ENCODE measurements at regions of chr2 and their contacts with region 1.

Region 1: DNA sequence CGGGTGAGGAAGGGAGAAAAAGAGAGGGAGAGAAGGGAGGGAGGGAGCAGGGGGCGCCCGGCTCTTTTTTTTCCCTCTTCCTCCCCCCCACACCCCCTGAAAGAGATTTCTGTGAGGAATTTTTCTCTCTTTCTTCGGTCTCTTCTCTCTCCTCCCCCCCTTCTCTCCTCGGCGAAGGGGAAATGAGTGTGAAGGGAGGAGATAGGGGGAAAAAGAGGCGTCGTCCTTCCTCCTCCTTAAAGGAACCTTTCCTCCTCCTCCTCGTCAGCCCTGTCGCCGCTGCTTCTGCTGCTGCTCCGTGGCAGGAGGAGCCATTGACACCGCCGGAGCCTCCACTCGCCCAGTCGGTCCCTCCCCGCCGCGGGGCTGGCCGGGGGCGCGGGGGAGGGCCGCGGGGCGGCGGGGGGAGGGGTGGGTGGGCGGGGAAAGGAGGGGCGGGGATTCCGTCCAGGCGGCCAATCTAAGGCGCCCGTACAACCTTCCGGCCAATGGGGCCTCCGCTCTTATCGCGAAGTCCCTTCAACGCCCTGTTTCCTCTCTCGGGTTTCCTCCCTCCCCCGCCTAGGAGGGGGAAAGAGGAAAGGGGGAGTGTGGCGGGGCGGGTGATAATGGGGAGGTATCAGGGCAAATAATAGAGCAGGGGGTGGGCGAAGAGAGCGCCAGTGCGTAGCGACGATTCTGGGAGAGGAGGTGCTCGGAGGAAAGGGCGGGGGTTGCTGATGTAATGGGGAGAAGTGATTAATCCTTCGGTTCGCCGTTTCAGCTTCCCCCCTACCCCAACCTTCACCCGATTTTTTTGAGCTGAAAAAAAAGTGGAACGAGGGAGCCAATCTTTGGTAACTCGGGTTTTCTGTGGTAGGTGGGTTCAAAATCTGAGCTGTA is at the start of gene FBXO11:
- DNase-seq: peak; percentile 97
- H3K4me3 Mint-ChIP-seq: peak within 1 kb of the TSS; percentile 87
- H3K27ac Mint-ChIP-seq: peak within 1 kb of the TSS; percentile 96
- H3K4me1 Mint-ChIP-seq: peaks cover 29% of the 10 kb centered on the region
- H3K27me3 Mint-ChIP-seq: no peaks in the 10 kb centered on the region
- total RNA-seq, gene FBXO11: 32.8 to 35.0 TPM

Region 2: DNA sequence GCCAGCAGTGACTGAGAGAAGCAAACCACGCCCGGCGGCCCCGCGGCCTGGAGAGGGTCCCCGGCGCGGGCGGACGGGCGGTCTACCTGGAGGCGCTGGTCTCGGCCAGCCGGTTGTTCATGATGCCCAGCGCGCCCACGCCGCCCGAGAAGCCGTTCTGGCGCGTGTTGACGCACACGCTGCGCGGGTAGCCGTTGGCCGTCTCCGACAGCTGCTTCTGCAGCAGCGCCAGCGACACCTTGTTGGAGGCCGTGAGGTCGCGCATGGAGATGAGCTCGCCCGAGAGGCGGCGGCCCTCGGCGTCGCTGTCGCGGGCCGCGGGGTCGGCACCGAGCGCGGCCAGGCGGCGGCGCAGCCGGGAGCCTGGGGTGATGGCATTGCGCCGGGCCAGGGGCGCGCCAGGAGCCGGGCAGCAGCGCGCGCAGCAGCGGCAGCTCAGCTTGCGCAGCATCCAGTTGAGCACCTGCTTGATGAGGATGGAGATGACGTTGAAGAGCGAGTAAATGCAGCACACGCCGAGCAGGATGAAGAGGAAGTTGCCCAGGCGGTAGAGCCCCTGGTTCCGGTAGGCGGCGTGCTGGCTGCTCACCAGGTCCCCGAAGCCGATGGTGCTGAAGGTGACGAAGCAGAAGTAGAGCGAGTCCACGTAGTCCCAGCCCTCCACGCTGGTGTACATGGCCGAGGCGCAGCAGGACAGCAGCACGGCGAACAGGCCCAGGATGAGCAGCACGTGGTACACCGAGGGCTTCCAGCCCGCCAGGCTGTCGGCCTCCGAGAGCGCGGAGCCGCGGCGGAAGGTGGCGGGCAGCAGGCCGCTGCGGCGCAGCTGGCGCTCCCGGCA is 385.4 kb before region 1 on chr2:
- CTCF ChIA-PET with region 1: no interaction called
- intact Hi-C with region 1: loop called (anchors 1 kb)
- DNase-seq: peak; percentile 83
- H3K4me3 Mint-ChIP-seq: peak overlapping the region; percentile 82
- H3K27ac Mint-ChIP-seq: peak overlapping the region; percentile 72
- H3K4me1 Mint-ChIP-seq: peaks cover 10% of the 10 kb centered on the region
- H3K27me3 Mint-ChIP-seq: no peaks in the 10 kb centered on the region

Region 3: GRCh38 chr2:47833516-47833968 is 72.9 kb before region 1 on chr2:
- CTCF ChIA-PET with region 1: no interaction called
- intact Hi-C with region 1: no loop called
- DNase-seq: no peak
- H3K4me3 Mint-ChIP-seq: no peak overlapping the region
- H3K27ac Mint-ChIP-seq: no peak overlapping the region
- H3K4me1 Mint-ChIP-seq: peaks cover 2% of the 10 kb centered on the region
- H3K27me3 Mint-ChIP-seq: no peaks in the 10 kb centered on the region

Region 4: DNA sequence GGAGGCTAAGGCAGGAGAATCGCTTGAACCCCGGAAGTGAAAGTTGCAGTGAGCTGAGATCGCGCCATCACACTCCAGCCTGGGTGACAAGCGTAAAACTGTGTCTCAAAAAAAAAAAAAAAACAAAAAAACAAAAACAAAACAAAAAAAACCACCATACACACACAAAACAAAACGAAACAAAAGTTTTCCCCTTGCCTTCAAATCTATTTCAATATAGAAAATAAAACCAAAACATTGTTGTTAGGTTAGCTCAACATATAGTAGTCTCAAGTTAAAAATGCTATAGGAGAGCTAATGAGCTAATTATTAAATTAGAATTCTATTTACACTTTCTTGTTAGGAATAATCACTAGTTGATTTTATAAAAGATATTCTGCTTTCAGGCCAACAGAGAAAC is 43.4 kb before region 1 on chr2:
- CTCF ChIA-PET with region 1: interaction called, 12 read pairs
- intact Hi-C with region 1: no loop called
- DNase-seq: no peak
- H3K4me3 Mint-ChIP-seq: no peak overlapping the region
- H3K27ac Mint-ChIP-seq: no peak overlapping the region
- H3K4me1 Mint-ChIP-seq: peaks cover 59% of the 10 kb centered on the region
- H3K27me3 Mint-ChIP-seq: no peaks in the 10 kb centered on the region

Region 5: DNA sequence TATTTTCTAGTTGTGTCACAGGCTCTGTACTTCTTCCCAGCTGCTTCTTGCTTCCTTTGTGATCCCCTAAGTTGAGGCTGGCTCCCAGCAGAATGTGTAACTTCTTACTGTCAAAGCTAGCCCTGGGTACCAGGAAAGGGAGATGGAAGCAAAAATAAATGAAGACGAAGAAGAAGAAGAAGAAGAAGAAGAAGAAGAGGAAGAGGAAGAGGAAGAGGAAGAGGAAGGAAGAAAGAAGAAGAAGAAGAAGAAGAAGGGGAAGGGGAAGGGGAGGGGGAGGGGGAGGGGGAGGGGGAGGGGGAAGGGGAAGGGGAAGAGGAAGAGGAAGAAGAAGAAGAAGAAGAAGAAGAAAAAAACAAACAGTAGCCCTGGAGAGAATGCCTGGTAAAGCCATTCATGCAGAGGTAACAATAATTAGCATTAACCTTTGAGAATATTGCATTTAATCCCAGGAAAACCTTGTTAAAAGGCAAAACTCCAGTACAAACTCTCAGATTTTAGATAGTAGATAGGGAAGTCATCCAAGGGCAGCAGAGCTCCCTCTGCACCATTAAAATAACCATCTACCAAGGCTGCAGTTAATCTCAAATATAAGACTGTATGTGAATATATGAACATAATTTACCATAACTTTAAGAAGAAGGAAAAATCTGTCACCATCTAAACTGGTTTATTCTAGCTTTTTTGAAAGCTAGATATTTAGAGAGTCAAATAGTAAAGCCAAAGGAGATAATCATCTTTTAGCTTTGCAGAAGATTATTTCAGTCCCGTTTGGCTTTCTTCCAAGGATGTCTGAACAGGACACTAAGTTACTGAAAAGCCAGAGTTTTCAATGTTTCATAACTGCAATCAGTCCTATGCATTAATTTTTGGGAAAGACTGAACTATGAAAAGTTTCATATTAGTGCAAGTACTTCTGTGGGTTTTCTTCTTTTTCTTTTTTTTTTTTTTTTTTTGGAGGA is 44.2 kb after region 1 on chr2:
- CTCF ChIA-PET with region 1: no interaction called
- intact Hi-C with region 1: no loop called
- DNase-seq: no peak
- H3K4me3 Mint-ChIP-seq: no peak overlapping the region
- H3K27ac Mint-ChIP-seq: no peak overlapping the region
- H3K4me1 Mint-ChIP-seq: no peaks in the 10 kb centered on the region
- H3K27me3 Mint-ChIP-seq: peaks cover 2% of the 10 kb centered on the region

Region 6: GRCh38 chr2:48107326-48107925 is 201.0 kb after region 1 on chr2:
- CTCF ChIA-PET with region 1: interaction called, 5 read pairs
- intact Hi-C with region 1: loop called (anchors 1 kb)
- DNase-seq: no peak
- H3K4me3 Mint-ChIP-seq: no peak overlapping the region
- H3K27ac Mint-ChIP-seq: peak overlapping the region; percentile 3
- H3K4me1 Mint-ChIP-seq: peaks cover 29% of the 10 kb centered on the region
- H3K27me3 Mint-ChIP-seq: peaks cover 2% of the 10 kb centered on the region

Region 7: DNA sequence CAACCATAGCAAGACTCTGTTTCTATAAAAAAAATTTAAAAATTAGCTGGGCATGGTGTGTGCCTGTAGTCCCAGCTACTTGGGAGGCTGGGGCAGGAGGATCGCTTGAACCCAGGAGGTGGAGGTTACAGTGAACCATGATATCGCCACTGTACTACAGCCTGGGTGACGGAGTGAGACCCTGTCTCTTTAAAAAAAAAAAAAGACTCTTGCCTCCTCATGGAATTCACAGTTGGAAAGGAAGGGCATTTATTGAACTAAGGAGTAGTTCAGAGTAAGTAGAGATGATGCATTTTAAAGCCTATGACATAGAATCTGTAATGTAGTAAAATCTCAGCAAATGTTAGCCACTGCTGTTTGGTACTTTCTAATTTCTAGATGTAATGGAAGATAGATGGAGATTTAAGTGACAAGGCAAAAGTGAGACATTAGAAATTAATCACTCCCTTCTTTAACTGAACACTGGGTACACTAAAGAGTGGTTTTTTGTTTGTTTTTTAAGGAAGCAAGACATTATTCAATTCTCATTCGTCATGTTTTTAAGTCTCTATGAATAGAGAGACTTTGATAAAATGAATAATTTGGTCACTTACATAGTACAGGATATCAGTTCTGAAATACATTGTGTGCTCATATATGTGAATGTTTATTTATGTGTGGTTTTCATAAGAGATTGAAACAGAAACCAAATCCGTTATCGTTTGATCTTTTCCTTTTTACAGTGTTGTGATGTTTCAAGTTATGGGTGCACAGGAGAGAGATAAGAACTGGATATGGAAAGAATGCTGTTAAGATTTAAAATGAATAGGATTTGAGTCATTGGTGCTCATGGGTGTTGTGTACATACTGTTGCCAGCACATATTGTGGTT is 437.4 kb after region 1 on chr2:
- CTCF ChIA-PET with region 1: no interaction called
- intact Hi-C with region 1: loop called (anchors 1 kb)
- DNase-seq: no peak
- H3K4me3 Mint-ChIP-seq: peak overlapping the region; percentile 8
- H3K27ac Mint-ChIP-seq: peak overlapping the region; percentile 47
- H3K4me1 Mint-ChIP-seq: peaks cover 37% of the 10 kb centered on the region
- H3K27me3 Mint-ChIP-seq: no peaks in the 10 kb centered on the region

Region 8: GRCh38 chr2:48448274-48449061 is 542.1 kb after region 1 on chr2:
- CTCF ChIA-PET with region 1: interaction called, 5 read pairs
- intact Hi-C with region 1: loop called (anchors 2 kb)
- DNase-seq: no peak
- H3K4me3 Mint-ChIP-seq: peak overlapping the region; percentile 46
- H3K27ac Mint-ChIP-seq: peak overlapping the region; percentile 84
- H3K4me1 Mint-ChIP-seq: peaks cover 48% of the 10 kb centered on the region
- H3K27me3 Mint-ChIP-seq: no peaks in the 10 kb centered on the region

Measured in activated naive CD4-positive, alpha-beta T cell treated with anti-CD3 and anti-CD28 coated beads for 36 hours (primary cell).